ENCODE measurements at regions of chr14 and their contacts with region 1.

Region 1: DNA sequence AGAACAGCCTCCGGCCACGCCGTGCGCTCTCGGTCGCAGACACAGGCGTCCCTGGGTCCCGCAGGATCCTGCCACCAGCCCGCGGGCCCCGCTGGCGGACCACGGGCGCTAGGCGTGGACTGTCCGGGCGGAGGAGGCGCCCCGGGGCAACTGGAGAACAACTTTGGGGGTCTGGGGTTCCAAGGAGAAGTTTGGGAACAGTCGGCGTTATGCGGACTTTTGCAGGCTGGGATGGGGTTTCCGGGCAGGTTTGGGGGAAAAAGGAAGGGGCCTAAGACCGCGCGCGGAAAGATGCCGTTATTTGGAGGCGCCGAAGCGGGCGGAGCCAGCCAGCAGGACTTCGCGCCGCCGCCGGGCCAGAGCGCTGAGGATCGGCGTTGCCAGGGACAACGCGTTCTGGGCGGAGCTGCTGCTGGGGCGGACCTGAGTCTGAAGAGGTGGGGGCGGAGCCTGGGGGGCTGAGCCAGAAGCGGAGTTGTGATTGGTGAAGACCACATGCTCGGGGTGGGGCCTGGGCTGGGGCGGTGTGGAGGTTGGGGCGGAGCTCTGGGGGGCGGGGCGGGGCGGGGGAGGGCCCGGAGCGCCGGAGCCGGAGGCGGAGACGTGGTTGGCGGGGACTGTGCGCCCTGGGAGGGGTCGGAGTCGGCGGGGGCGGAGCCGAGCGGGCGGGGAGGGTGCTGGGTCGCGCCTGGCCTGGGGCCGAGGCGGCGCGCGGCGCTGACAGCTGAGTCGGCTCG is at the start of gene CYP46A1:
- DNase-seq: peak; percentile 97 to 99 (median 99)
- ATAC-seq: peak; percentile 98
- H3K4me3 ChIP-seq: peak within 1 kb of the TSS; percentile 93
- H3K4me3 Mint-ChIP-seq: peak within 1 kb of the TSS; percentile 79 to 96 (median 92)
- H3K27ac ChIP-seq: peak within 1 kb of the TSS; percentile 75
- H3K27ac Mint-ChIP-seq: peak within 1 kb of the TSS; percentile 52 to 94 (median 83)
- H3K4me1 ChIP-seq: peaks cover 5 to 12% of the 10 kb centered on the region in 2 donors
- H3K4me1 Mint-ChIP-seq: peaks cover 2 to 29% (median 11%) of the 10 kb centered on the region in 7 donors
- H3K27me3 ChIP-seq: no peaks in the 10 kb centered on the region
- H3K27me3 Mint-ChIP-seq: peaks cover 2 to 34% (median 32%) of the 10 kb centered on the region in 5 donors
- total RNA-seq, gene CYP46A1: 0.13 to 0.34 (median 0.32) TPM in 4 of 5 experiments, not detected in the other

Region 2: DNA sequence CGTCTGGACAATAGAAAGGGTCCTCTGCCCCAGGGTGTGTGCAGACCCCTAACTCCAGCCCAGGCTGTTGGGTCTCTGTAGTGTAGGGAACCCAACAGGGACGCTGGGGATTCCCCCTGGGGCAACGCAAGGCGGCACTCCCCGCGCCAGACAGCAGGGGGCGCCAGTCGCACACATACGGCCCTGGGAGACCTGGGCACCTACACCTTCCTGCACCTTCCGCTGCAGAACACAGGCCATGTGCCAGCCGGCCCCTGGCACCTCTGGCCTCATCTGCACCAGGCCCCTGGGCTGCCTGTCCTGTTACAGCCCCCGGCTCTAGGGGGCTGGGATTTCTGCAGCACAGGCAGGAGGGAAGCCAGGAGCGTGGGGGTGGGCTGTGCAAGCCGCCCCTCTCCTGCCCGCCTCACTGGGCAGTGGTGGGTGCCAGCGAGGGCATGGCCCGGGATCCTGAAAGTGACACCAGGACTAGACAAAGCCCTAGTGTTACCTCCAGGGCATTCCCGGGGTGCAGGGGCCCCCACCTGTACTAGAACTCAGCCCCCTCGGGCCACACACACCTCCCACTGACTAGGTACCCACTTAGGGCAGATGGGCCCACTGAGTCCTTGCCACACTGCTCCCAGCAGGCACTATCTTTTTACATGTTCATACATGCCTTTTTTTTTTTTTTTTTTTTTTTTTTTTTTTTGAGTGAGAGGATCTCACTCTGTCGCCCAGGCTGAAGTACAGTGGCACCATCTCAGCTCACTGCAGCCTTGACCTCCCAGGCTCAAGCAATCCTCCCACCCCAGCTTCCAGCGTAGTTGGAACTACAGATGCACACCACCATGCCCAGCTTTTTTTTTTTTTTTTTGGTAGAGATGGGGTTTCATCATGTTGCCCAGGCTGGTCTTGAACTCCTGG is 165.1 kb before region 1 on chr14:
- CTCF ChIA-PET with region 1: interaction called, 4 read pairs
- POLR2A ChIA-PET with region 1: interaction called, 3 read pairs
- intact Hi-C with region 1: loop called (anchors 2 to 5 kb)
- DNase-seq: peak; percentile 69 to 91 (median 81)
- ATAC-seq: peak; percentile 84
- H3K4me3 ChIP-seq: no peak overlapping the region
- H3K4me3 Mint-ChIP-seq: no peak overlapping the region
- H3K27ac ChIP-seq: no peak overlapping the region
- H3K27ac Mint-ChIP-seq: peak overlapping the region in 1 of 9 donors; percentile 5
- H3K4me1 ChIP-seq: no peaks in the 10 kb centered on the region
- H3K4me1 Mint-ChIP-seq: no peaks in the 10 kb centered on the region
- H3K27me3 ChIP-seq: no peaks in the 10 kb centered on the region
- H3K27me3 Mint-ChIP-seq: no peaks in the 10 kb centered on the region

Region 3: DNA sequence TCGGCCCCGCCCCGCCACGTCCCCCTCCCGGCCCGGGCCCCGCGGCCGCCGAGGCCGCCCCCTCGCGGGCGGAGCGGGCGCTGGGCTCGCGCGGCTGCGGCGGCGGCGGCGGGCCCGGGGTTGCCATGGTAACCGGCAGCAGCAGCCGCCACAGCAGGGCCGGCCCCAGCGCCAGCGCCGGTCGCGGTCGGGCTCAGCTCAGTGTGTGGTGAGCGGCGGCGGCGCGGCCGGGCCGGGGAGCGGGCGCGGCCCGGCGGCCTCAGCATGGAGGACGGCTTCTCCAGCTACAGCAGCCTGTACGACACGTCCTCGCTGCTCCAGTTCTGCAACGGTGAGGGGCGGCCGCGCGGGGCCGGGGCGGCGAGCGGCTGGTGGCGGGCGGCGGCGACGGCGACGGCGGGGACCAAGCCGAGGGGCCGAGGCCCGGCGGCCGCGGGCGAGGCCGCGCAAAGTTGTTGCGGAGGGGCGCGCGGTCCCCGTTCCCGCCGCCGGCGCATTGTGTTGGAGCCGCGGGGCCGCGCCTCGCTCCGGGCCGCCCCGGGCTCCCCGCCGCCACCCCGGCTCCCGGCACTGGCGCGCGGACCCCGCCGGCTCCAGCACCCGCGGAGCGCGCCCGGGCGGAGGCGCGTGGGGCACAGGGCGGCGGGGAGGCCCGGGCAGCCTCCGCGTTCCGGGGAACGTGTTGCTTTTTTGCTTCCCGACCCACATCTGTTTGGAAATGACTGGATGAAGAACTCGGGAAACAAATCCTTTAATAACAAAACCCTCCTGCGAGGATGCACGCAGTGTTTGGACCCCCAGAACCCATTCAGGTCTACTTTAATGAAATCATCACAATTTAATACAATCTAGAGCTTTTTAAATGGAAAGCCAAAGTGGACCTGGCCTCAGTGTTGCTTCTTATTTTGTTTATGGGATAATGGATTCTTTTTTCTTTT is 109.7 kb after region 1 on chr14 and contains the start of gene EML1:
- CTCF ChIA-PET with region 1: interaction called, 3 read pairs
- POLR2A ChIA-PET with region 1: no interaction called
- intact Hi-C with region 1: loop called (anchors 1 to 5 kb)
- DNase-seq: peak; percentile 55 to 84 (median 72)
- ATAC-seq: peak; percentile 88
- H3K4me3 ChIP-seq: peak within 1 kb of the TSS; percentile 38
- H3K4me3 Mint-ChIP-seq: peak within 1 kb of the TSS; percentile 69 to 85 (median 79)
- H3K27ac ChIP-seq: no peak within 1 kb of the TSS
- H3K27ac Mint-ChIP-seq: peak within 1 kb of the TSS in 7 of 9 donors; percentile 12 to 69 (median 48)
- H3K4me1 ChIP-seq: peaks cover 0 to 4% of the 10 kb centered on the region in 2 donors
- H3K4me1 Mint-ChIP-seq: peaks cover 5 to 34% (median 21%) of the 10 kb centered on the region in 7 donors
- H3K27me3 ChIP-seq: peaks cover 0 to 5% of the 10 kb centered on the region in 2 donors
- H3K27me3 Mint-ChIP-seq: peaks cover 0 to 66% (median 27%) of the 10 kb centered on the region in 5 donors
- total RNA-seq, gene EML1: not detected

Region 4: DNA sequence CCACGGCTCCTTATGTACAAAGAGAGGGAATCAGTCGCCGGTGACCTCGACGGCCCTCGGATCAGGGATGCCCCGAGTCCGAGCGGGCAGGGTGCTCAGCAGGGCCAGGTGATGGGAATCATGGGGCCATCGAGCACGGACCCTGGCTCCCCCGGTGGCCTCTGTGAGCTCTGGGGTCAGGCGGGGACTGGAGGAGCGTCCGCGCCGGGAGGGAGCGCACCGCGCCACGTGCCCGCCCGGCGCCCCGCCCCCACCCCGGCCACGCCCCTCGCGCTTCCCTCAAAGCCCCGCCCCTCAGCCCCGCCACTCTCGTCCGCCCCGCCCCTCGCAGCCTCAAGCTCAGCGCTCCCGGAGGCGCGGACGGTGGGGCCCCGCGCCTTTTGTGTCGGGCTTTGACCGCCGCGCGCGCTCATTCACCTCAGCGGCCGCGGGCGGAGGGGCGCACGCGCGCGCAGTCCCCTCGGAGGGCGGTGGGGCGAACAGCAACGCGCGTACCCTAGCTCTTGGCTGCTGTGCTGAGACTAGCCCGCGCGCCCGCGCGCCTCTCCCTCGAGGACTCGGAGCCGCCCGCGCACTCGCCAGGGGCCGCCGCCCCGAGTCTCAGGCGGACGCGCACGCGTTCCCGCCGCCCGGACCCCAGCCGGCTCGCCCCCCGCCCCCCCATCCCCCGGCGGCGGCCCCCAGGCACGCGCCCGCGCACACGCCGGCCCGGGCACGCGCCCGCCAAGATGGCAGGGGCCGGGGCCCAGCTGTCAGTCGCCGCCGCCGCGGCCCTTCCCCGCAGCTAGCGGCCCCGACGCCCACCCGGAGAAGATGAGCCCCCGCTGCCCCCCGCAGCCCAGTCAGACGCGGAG is 287.5 kb after region 1 on chr14:
- CTCF ChIA-PET with region 1: no interaction called
- POLR2A ChIA-PET with region 1: no interaction called
- intact Hi-C with region 1: loop called in 1 of 2 experiments (anchors 10 kb)
- DNase-seq: peak; percentile 69 to 87 (median 81)
- ATAC-seq: peak; percentile 95
- H3K4me3 ChIP-seq: peak overlapping the region; percentile 53
- H3K4me3 Mint-ChIP-seq: peak overlapping the region; percentile 43 to 93 (median 76)
- H3K27ac ChIP-seq: peak overlapping the region; percentile 58
- H3K27ac Mint-ChIP-seq: peak overlapping the region in 4 of 9 donors; percentile 21 to 87 (median 48)
- H3K4me1 ChIP-seq: no peaks in the 10 kb centered on the region
- H3K4me1 Mint-ChIP-seq: peaks cover 7 to 21% (median 15%) of the 10 kb centered on the region in 7 donors
- H3K27me3 ChIP-seq: no peaks in the 10 kb centered on the region
- H3K27me3 Mint-ChIP-seq: peaks cover 0 to 33% (median 7%) of the 10 kb centered on the region in 5 donors

Region 5: GRCh38 chr14:100278702-100279101 is 594.9 kb after region 1 on chr14:
- CTCF ChIA-PET with region 1: no interaction called
- POLR2A ChIA-PET with region 1: no interaction called
- intact Hi-C with region 1: no loop called
- DNase-seq: no peak
- ATAC-seq: peak; percentile 57
- H3K4me3 ChIP-seq: no peak overlapping the region
- H3K4me3 Mint-ChIP-seq: no peak overlapping the region
- H3K27ac ChIP-seq: no peak overlapping the region
- H3K27ac Mint-ChIP-seq: peak overlapping the region in 7 of 9 donors; percentile 29 to 84 (median 75)
- H3K4me1 ChIP-seq: peaks cover 18 to 24% of the 10 kb centered on the region in 2 donors
- H3K4me1 Mint-ChIP-seq: peaks cover 23 to 59% (median 48%) of the 10 kb centered on the region in 7 donors
- H3K27me3 ChIP-seq: no peaks in the 10 kb centered on the region
- H3K27me3 Mint-ChIP-seq: no peaks in the 10 kb centered on the region

Measured in naive thymus-derived CD4-positive, alpha-beta T cell (primary cell).